ENCODE measurements at regions of chr14 and their contacts with region 1.

Region 1: DNA sequence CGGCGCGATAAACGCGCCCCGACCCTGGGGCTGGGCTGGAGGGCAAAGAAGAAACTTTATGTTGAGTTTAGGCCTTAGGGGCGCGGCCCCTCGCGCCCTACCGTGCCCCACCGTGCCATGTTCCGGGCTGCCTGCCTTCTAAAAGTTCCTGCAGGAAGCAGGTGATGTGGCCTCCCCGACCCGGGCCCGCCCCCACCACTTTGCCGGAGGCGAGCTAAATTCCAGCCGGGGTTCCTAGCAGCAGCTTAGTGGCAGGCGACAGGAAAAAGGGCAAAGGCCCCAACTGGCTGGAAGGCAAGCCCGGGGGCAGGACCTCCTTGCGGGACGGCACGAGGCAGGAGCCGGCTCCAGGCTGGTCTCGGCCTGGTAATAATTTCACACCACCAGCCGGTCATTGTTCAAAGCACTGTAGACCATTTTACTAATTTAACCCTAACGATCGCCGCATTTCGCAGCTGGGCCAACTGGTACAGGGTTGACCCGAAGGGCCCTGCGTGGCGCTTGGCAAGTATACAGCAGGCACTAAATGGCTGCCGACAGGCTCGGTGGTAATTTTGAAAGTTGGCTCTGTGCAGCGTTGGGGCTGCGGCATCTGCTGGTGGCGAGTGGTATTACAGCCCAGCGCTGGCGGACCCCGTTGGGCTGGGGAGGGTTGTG is 895 bp upstream of the CCDC88C start:
- DNase-seq: peak; percentile 89
- ATAC-seq: peak; percentile 54
- H3K4me3 Mint-ChIP-seq: peak overlapping the region; percentile 72
- H3K27ac Mint-ChIP-seq: peak overlapping the region; percentile 90
- H3K4me1 Mint-ChIP-seq: peaks cover 29% of the 10 kb centered on the region
- H3K27me3 Mint-ChIP-seq: no peaks in the 10 kb centered on the region
- CTCF ChIP-seq: peak; percentile 99

Region 2: GRCh38 chr14:91228112-91229004 is 190.2 kb before region 1 on chr14:
- CTCF ChIA-PET with region 1: no interaction called
- POLR2A ChIA-PET with region 1: no interaction called
- intact Hi-C with region 1: loop called (anchors 5 kb)
- DNase-seq: peak; percentile 96
- ATAC-seq: peak; percentile 84
- H3K4me3 Mint-ChIP-seq: peak overlapping the region; percentile 68
- H3K27ac Mint-ChIP-seq: peak overlapping the region; percentile 99
- H3K4me1 Mint-ChIP-seq: peaks cover 87% of the 10 kb centered on the region
- H3K27me3 Mint-ChIP-seq: no peaks in the 10 kb centered on the region
- CTCF ChIP-seq: no peak

Region 3: GRCh38 chr14:91277546-91278382 is 140.8 kb before region 1 on chr14:
- CTCF ChIA-PET with region 1: no interaction called
- POLR2A ChIA-PET with region 1: no interaction called
- intact Hi-C with region 1: no loop called
- DNase-seq: no peak
- ATAC-seq: no peak
- H3K4me3 Mint-ChIP-seq: no peak overlapping the region
- H3K27ac Mint-ChIP-seq: peak overlapping the region; percentile 31
- H3K4me1 Mint-ChIP-seq: no peaks in the 10 kb centered on the region
- H3K27me3 Mint-ChIP-seq: no peaks in the 10 kb centered on the region
- CTCF ChIP-seq: no peak

Region 4: DNA sequence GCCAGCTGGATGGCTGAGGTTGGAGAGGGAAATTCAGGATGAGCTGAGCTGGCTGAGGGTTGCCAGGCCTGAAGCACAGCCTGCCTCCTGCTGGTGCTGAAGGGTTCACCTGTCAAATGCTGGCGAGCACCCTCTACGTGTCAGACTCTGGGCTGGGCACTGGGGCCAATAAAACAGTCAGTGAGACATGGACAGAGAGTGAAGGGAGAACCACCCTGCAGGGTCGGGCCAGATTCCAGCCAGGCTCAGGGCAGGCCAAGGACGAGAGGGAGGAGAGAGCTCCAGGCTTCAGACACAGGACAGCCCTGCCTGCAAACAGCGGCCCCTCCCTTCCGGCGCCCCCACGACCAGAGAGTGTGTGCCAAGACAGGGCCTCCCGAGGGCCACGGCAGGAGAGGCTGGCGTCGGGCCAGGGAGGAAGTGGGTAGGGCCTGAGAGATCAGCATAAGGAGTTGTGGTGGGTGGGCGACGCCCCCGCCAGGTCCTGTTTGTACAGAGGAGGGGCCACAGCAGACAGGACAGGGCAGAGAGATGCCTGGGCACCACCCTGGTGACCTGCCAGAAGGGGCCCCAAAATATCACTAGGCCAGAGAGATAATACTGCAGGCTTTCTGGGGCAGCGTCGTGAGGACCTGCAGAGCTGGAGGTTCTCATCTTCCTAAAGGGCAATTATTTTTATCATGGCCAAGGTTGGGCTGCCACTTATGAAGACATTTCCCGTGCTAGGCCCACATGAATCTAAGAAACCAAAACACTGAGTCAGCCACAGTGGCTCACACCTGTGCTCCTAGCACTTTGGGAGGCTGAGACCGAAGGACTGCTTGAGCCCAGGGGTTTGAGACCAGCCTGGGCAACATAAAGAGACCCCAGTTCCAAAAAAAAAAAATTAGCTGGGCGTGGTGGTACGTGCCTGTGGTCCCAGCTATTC is 100.9 kb before region 1 on chr14:
- CTCF ChIA-PET with region 1: interaction called, 155 read pairs
- POLR2A ChIA-PET with region 1: interaction called, 137 read pairs
- intact Hi-C with region 1: no loop called
- DNase-seq: peak; percentile 97
- ATAC-seq: peak; percentile 65
- H3K4me3 Mint-ChIP-seq: peak overlapping the region; percentile 64
- H3K27ac Mint-ChIP-seq: peak overlapping the region; percentile 97
- H3K4me1 Mint-ChIP-seq: peaks cover 84% of the 10 kb centered on the region
- H3K27me3 Mint-ChIP-seq: no peaks in the 10 kb centered on the region
- CTCF ChIP-seq: peak; percentile 54

Region 5: DNA sequence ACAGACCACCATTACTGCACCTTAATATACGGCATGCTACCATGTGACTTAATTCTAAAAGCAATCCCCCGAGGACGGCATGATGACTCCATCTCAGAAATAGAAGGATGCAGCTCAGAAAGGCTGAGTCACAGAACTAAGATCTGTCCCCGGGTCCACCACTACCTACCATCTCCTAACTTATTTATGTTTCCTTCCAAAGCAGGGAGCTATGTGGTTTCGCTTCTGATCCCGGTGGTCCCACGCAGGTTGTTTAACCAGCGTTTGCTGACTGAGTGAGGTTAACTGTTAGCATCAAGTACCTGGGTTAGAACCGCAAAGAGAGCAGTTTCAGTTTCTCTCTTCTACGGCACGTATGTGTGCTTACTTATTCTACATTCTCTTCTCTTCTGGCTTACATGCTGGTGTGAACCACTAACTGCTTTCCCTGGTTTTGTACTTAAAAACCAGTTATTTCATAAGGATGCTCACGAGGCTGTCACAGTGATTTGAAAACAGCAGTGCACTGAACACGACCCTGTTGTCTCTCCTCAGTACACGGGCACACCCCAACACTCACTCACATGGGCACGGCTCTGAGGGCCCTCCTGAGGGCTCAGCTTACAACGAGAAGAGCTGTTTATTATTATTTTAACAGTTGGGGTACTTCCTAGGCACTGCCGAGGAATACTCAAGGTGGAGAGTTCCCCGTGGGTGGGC is 67.6 kb before region 1 on chr14:
- CTCF ChIA-PET with region 1: interaction called, 141 read pairs
- POLR2A ChIA-PET with region 1: interaction called, 55 read pairs
- intact Hi-C with region 1: loop called (anchors 10 kb)
- DNase-seq: peak; percentile 90
- ATAC-seq: peak; percentile 59
- H3K4me3 Mint-ChIP-seq: peak overlapping the region; percentile 65
- H3K27ac Mint-ChIP-seq: peak overlapping the region; percentile 85
- H3K4me1 Mint-ChIP-seq: peaks cover 95% of the 10 kb centered on the region
- H3K27me3 Mint-ChIP-seq: no peaks in the 10 kb centered on the region
- CTCF ChIP-seq: no peak

Region 6: GRCh38 chr14:91373591-91374254 is 44.8 kb before region 1 on chr14:
- CTCF ChIA-PET with region 1: interaction called, 88 read pairs
- POLR2A ChIA-PET with region 1: interaction called, 43 read pairs
- intact Hi-C with region 1: loop called (anchors 5 kb)
- DNase-seq: peak; percentile 84
- ATAC-seq: peak; percentile 53
- H3K4me3 Mint-ChIP-seq: peak overlapping the region; percentile 49
- H3K27ac Mint-ChIP-seq: peak overlapping the region; percentile 90
- H3K4me1 Mint-ChIP-seq: peaks cover 98% of the 10 kb centered on the region
- H3K27me3 Mint-ChIP-seq: no peaks in the 10 kb centered on the region
- CTCF ChIP-seq: no peak

Region 7: DNA sequence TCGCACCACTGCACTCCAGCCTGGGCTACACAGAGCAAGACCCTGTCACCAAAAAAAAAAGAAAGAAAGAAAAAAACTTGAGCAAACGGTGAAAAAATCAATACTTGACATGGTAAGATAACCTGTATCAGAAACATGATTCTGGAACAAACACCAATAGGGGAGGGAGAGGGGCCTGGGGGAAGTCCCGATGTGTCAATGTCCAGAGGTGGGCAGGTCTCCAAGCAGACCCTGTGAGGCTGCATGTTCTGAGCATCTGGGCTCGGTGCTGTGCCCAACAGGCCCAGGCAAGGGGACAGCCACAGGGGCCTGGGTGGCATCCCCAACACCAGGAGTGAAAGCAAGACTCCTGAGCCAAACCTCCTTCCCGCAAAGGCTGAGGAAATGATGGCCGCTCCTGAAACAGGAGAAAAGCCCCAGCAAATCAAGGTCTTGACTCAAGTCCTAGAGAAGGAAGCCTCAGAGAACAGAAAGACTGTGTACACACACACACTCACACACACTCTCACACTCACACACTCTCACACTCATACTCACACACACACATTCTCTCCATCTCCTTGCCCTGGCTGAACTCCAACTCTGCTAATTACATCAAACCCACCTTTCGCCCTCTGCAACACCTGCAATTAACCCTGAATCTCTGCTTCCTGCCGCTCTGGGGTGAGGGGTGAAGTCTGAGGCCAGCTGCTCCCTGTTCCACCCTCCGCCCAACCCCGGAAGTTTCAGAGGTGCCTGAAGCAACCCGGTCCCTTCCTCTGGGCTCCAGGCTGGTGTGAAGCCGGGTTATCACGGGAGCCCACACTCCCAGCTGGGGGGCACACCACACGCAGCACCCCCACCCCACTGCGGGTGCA is 21.3 kb before region 1 on chr14:
- CTCF ChIA-PET with region 1: interaction called, 8 read pairs
- POLR2A ChIA-PET with region 1: interaction called, 214 read pairs
- intact Hi-C with region 1: no loop called
- DNase-seq: peak; percentile 80
- ATAC-seq: peak; percentile 73
- H3K4me3 Mint-ChIP-seq: peak overlapping the region; percentile 70
- H3K27ac Mint-ChIP-seq: peak overlapping the region; percentile 95
- H3K4me1 Mint-ChIP-seq: peaks cover 89% of the 10 kb centered on the region
- H3K27me3 Mint-ChIP-seq: no peaks in the 10 kb centered on the region
- CTCF ChIP-seq: no peak

Region 8: GRCh38 chr14:91510174-91511042 is 91.9 kb after region 1 on chr14 and contains the start of gene PPP4R3A:
- CTCF ChIA-PET with region 1: no interaction called
- POLR2A ChIA-PET with region 1: interaction called, 12 read pairs
- intact Hi-C with region 1: no loop called
- DNase-seq: peak; percentile 95
- ATAC-seq: peak; percentile 90
- H3K4me3 Mint-ChIP-seq: peak within 1 kb of the TSS; percentile 95
- H3K27ac Mint-ChIP-seq: peak within 1 kb of the TSS; percentile 100
- H3K4me1 Mint-ChIP-seq: peaks cover 18% of the 10 kb centered on the region
- H3K27me3 Mint-ChIP-seq: no peaks in the 10 kb centered on the region
- CTCF ChIP-seq: no peak
- total RNA-seq, gene PPP4R3A: 106 to 111 TPM

Region 9: DNA sequence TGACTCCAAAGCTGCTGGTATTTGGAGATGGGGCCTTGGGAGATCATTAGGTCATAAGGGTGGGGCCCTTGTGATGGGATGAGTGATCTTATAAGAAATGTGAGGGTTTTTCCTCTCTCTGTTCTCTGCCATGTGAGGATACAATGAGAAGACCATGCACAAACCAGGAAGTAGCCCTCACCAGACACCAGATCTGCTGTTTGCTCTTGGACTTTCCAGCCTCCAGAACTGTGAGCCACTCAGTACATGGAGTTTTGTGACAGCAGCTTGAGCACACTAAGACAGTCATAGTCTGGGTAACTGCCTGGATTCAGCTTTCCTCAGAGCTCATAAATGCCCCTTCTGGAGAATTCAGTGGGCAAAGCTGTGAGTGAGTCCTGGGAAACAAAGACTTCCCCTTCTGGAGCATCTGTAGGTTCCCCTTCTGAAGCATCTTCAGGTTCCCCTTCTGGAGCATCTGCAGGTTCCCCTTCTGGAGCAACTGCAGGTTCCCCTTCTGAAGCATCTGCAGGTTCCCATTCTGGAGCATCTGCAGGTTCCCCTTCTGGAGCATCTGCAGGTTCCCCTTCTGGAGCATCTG is 102.6 kb after region 1 on chr14:
- CTCF ChIA-PET with region 1: no interaction called
- POLR2A ChIA-PET with region 1: no interaction called
- intact Hi-C with region 1: no loop called
- DNase-seq: no peak
- ATAC-seq: no peak
- H3K4me3 Mint-ChIP-seq: no peak overlapping the region
- H3K27ac Mint-ChIP-seq: no peak overlapping the region
- H3K4me1 Mint-ChIP-seq: no peaks in the 10 kb centered on the region
- H3K27me3 Mint-ChIP-seq: peaks cover 3% of the 10 kb centered on the region
- CTCF ChIP-seq: no peak